ENCODE measurements at regions of chr2 and their contacts with region 1.

Region 1: GRCh38 chr2:102240640-102241370 is 54.0 kb downstream of the IL1RL2 start:
- DNase-seq: peak; percentile 94
- H3K4me3 ChIP-seq: no peak overlapping the region
- H3K27ac ChIP-seq: peak overlapping the region; percentile 55 to 82 (median 72)
- H3K4me1 ChIP-seq: peaks cover 0 to 9% (median 6%) of the 10 kb centered on the region in 4 donors
- H3K27me3 ChIP-seq: no peaks in the 10 kb centered on the region
- CTCF ChIP-seq: peak; percentile 97 to 98 (median 97)
- EP300 ChIP-seq: peak; percentile 35
- POLR2A ChIP-seq: no peak

Region 2: DNA sequence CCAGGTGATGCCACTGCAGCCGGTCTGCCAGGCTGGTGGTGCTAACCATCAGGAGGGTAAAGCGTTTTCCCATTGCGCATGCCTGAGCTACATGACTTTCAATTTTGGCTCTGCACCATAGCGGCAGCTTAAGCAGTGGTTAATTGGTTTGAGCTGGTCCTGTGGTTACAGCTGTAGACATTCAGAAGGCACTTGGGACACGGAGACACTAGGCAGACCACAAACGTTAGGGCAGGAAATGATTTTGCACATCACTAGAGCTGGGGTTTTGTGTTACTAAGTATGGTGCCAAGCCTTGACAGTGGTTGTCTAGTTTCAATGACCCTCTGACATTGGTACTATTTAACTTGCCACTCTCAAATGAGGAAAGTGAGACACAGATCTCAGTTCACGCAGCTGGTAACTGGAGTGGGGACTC is 1017.0 kb before region 1 on chr2:
- in situ Hi-C with region 1: no loop called
- intact Hi-C with region 1: no loop called
- DNase-seq: peak; percentile 51
- H3K4me3 ChIP-seq: no peak overlapping the region
- H3K27ac ChIP-seq: peak overlapping the region in 1 of 4 donors; percentile 21
- H3K4me1 ChIP-seq: peaks cover 0 to 4% (median 0%) of the 10 kb centered on the region in 4 donors
- H3K27me3 ChIP-seq: no peaks in the 10 kb centered on the region
- CTCF ChIP-seq: no peak
- EP300 ChIP-seq: no peak
- POLR2A ChIP-seq: no peak

Region 3: GRCh38 chr2:102187496-102188150 is 53.2 kb before region 1 on chr2:
- in situ Hi-C with region 1: no loop called
- intact Hi-C with region 1: loop called (anchors 10 kb)
- DNase-seq: peak; percentile 53
- H3K4me3 ChIP-seq: peak overlapping the region; percentile 32 to 54 (median 44)
- H3K27ac ChIP-seq: peak overlapping the region; percentile 27 to 68 (median 54)
- H3K4me1 ChIP-seq: peaks cover 0 to 19% (median 7%) of the 10 kb centered on the region in 4 donors
- H3K27me3 ChIP-seq: no peaks in the 10 kb centered on the region
- CTCF ChIP-seq: peak; percentile 25 to 63 (median 35)
- EP300 ChIP-seq: no peak
- POLR2A ChIP-seq: no peak

Measured in transverse colon (tissue), 4 donors.